CD8-positive, alpha-beta memory T cell (primary cell): ENCODE measurements at regions of chr16 and their contacts with region 1.

Region 1: DNA sequence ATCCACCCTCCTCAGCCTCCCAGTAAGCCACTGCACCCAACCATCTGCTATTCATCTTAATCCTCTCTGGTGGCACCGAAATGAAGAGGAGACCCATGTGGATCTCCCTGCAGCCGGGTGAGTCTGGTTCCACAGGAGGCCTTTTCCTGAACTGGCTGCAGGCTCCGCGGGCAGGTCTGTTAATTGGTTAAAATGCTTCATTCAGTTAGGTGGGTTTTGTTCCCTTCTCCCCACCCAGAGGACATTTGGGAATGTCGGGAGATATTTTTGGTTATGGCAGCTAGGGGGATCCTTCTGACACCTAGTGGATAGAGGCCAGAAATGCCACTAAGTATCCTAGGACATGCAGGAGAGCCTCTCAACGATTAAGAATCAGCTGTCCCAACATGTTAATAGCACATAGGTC is 16.7 kb downstream of the C16orf54 start:
- DNase-seq: no peak
- H3K4me3 ChIP-seq: no peak overlapping the region
- H3K4me3 Mint-ChIP-seq: peak overlapping the region in 1 of 7 donors; percentile 46
- H3K27ac ChIP-seq: no peak overlapping the region
- H3K27ac Mint-ChIP-seq: no peak overlapping the region
- H3K4me1 ChIP-seq: peaks cover 9% of the 10 kb centered on the region
- H3K4me1 Mint-ChIP-seq: peaks cover 19 to 30% (median 30%) of the 10 kb centered on the region in 3 donors
- H3K27me3 ChIP-seq: no peaks in the 10 kb centered on the region
- H3K27me3 Mint-ChIP-seq: peaks cover 0 to 1% of the 10 kb centered on the region in 2 donors

Region 2: DNA sequence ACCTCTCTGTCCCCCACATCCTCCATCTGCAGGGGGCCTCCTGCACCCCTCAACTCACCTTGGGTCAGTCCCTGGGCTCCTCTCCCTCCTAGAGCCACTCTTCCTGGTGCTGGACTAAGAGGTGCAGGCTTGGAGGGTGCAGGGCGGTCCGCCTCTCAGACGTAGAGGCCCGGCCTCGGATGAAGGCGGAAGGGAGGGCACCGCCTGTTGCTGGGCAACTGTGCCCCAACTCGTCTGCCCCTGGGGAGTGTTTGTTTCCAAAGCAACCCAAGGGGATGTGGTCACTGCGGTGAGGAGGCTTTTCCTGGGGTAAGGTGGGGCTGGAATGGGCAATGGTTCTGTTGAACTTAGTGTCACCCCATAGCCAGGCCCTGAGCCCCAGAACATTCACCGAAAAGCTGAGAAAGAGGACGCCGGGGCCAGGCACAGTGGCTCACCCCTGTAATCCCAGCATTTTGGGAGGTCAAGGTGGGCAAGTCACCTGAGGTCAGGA is 16.8 kb after region 1 on chr16 and contains the start of gene C16orf54:
- CTCF ChIA-PET with region 1: interaction called, 14 read pairs
- POLR2A ChIA-PET with region 1: interaction called, 3 read pairs
- DNase-seq: peak; percentile 89 to 99 (median 98)
- H3K4me3 ChIP-seq: peak within 1 kb of the TSS; percentile 86
- H3K4me3 Mint-ChIP-seq: peak within 1 kb of the TSS; percentile 96 to 100 (median 99)
- H3K27ac ChIP-seq: peak within 1 kb of the TSS; percentile 97
- H3K27ac Mint-ChIP-seq: peak within 1 kb of the TSS; percentile 98 to 100 (median 100)
- H3K4me1 ChIP-seq: peaks cover 65% of the 10 kb centered on the region
- H3K4me1 Mint-ChIP-seq: peaks cover 57 to 70% (median 61%) of the 10 kb centered on the region in 3 donors
- H3K27me3 ChIP-seq: no peaks in the 10 kb centered on the region
- H3K27me3 Mint-ChIP-seq: peaks cover 0 to 5% of the 10 kb centered on the region in 2 donors
- total RNA-seq, gene C16orf54: 32.3 to 33.3 TPM

Region 3: GRCh38 chr16:29765167-29766032 is 36.3 kb after region 1 on chr16:
- CTCF ChIA-PET with region 1: no interaction called
- POLR2A ChIA-PET with region 1: no interaction called
- DNase-seq: peak in 1 of 5 donors; percentile 19
- H3K4me3 ChIP-seq: no peak overlapping the region
- H3K4me3 Mint-ChIP-seq: no peak overlapping the region
- H3K27ac ChIP-seq: no peak overlapping the region
- H3K27ac Mint-ChIP-seq: peak overlapping the region in 1 of 8 donors; percentile 70
- H3K4me1 ChIP-seq: peaks cover 5% of the 10 kb centered on the region
- H3K4me1 Mint-ChIP-seq: peaks cover 3 to 9% (median 7%) of the 10 kb centered on the region in 3 donors
- H3K27me3 ChIP-seq: no peaks in the 10 kb centered on the region
- H3K27me3 Mint-ChIP-seq: no peaks in the 10 kb centered on the region